ENCODE measurements at regions of chr20 and their contacts with region 1.

Region 1: GRCh38 chr20:53599378-53600270 is 6.0 kb upstream of the ZNF217 start:
- DNase-seq: peak in 1 of 14 experiments; percentile 8
- ATAC-seq: no peak
- H3K4me3 ChIP-seq: no peak overlapping the region
- H3K4me3 Mint-ChIP-seq: peak overlapping the region; percentile 73
- H3K27ac ChIP-seq: peak overlapping the region in 1 of 2 donors; percentile 75
- H3K27ac Mint-ChIP-seq: peak overlapping the region; percentile 95
- H3K4me1 ChIP-seq: peaks cover 25% of the 10 kb centered on the region
- H3K4me1 Mint-ChIP-seq: peaks cover 78% of the 10 kb centered on the region
- H3K27me3 ChIP-seq: no peaks in the 10 kb centered on the region
- H3K27me3 Mint-ChIP-seq: no peaks in the 10 kb centered on the region
- CTCF ChIP-seq: no peak

Region 2: DNA sequence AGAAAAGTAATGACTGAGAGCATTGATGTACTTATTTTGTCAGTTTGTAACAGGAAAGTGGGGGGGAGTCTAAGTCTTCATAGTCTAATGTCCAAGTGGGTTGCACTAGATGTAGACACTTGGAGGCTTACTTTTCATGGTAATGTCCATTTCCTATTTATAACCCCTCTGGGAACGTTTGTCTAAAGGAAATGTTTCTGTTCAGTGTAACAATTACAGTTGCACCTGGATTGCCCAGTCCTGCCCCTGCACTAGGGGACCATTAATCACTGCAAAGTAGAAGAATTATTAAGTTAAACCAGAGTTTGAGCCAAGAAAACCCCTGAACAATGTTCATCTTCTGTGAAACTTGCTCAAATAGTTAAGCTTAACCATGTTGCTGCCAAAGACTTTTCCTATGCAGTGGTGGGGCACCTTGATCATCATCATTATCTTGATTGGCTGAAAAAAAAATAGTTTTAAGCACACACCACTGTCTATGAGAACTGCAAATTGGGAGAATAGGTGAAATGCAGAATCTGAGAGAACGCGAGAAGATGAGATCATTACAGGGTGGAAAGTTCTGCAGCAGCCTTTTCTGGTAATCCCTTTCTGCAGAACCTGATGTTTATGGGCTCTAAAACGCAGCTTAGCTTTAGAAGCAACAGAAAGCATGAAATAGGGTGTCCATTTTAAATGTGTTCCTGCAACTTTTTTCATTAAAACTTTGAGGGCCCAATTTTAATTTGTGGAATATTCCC is 112.0 kb before region 1 on chr20:
- CTCF ChIA-PET with region 1: no interaction called
- POLR2A ChIA-PET with region 1: no interaction called
- intact Hi-C with region 1: no loop called
- DNase-seq: no peak
- ATAC-seq: no peak
- H3K4me3 ChIP-seq: no peak overlapping the region
- H3K4me3 Mint-ChIP-seq: no peak overlapping the region
- H3K27ac ChIP-seq: no peak overlapping the region
- H3K27ac Mint-ChIP-seq: no peak overlapping the region
- H3K4me1 ChIP-seq: no peaks in the 10 kb centered on the region
- H3K4me1 Mint-ChIP-seq: no peaks in the 10 kb centered on the region
- H3K27me3 ChIP-seq: no peaks in the 10 kb centered on the region
- H3K27me3 Mint-ChIP-seq: no peaks in the 10 kb centered on the region
- CTCF ChIP-seq: no peak

Region 3: GRCh38 chr20:53635221-53635924 is 35.7 kb after region 1 on chr20:
- CTCF ChIA-PET with region 1: no interaction called
- POLR2A ChIA-PET with region 1: no interaction called
- intact Hi-C with region 1: loop called in 1 of 2 experiments (anchors 5 kb)
- DNase-seq: no peak
- ATAC-seq: no peak
- H3K4me3 ChIP-seq: no peak overlapping the region
- H3K4me3 Mint-ChIP-seq: peak overlapping the region; percentile 10
- H3K27ac ChIP-seq: no peak overlapping the region
- H3K27ac Mint-ChIP-seq: peak overlapping the region; percentile 55
- H3K4me1 ChIP-seq: peaks cover 11% of the 10 kb centered on the region
- H3K4me1 Mint-ChIP-seq: peaks cover 32% of the 10 kb centered on the region
- H3K27me3 ChIP-seq: no peaks in the 10 kb centered on the region
- H3K27me3 Mint-ChIP-seq: no peaks in the 10 kb centered on the region
- CTCF ChIP-seq: no peak

Measured in CD4-positive, alpha-beta T cell (primary cell).